HepG2 (cell line): ENCODE measurements at regions of chr2 and their contacts with region 1.

Region 1: DNA sequence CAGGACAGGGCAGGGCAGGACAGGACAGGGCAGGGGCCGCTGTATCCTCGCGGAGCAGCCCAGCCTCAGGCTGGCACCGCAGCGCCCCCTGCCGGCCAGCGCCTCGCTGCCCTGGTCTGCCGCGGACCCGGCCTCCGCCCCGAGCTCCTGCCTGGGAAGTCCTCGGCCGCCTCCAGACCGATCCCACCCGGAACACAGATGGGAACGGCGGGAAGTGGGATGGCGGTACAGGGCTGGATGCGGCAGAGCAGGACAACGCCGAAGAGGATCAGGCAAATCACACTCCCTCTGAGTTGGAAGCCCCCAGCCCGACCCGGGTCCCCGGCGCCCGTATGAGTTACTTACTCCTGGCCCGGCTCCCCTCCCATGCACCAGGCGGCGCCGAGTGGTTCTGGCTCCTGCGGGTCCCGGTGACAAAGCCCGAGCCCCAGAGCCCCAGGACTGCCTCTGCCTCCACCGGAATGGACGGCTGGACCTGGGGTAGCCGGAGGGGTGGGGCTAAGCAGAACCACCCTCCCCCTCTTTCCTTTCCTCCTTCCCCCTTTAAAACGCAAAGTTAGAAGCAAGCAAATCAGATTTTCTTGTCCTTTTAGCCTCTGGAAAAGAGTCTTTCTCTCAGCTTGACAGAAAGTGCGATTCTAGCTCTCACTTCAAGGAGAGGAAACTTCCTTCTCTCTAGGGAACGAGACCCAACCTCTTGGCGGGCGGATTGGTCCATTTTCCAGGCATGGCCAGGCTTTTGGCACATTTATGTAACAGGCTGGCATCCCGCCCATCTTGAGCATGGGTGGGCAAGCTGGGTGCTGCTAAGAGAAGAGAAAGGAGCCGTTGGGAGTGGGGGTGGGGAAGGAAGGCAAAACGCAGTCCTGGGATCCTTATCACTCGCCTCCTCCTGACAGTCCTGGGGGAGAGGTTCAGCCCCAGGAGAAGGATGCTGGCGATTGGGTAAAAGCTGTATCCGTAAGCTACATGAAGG is at the start of gene TP53I3:
- DNase-seq: peak; percentile 87
- ATAC-seq: peak; percentile 92
- H3K4me3 ChIP-seq: peak within 1 kb of the TSS; percentile 67 to 84 (median 74)
- H3K27ac ChIP-seq: peak within 1 kb of the TSS; percentile 89
- H3K4me1 ChIP-seq: peaks cover 30% of the 10 kb centered on the region
- H3K27me3 ChIP-seq: no peaks in the 10 kb centered on the region; a peak in 1 of 5 replicates
- CTCF ChIP-seq: peak; percentile 94
- EP300 ChIP-seq: no peak; a peak in 1 of 4 replicates
- POLR2A ChIP-seq: peak; percentile 73 to 75
- RAD21 ChIP-seq: peak; percentile 98
- total RNA-seq, gene TP53I3: 44.1 and 48.2 TPM in 2 replicates

Region 2: DNA sequence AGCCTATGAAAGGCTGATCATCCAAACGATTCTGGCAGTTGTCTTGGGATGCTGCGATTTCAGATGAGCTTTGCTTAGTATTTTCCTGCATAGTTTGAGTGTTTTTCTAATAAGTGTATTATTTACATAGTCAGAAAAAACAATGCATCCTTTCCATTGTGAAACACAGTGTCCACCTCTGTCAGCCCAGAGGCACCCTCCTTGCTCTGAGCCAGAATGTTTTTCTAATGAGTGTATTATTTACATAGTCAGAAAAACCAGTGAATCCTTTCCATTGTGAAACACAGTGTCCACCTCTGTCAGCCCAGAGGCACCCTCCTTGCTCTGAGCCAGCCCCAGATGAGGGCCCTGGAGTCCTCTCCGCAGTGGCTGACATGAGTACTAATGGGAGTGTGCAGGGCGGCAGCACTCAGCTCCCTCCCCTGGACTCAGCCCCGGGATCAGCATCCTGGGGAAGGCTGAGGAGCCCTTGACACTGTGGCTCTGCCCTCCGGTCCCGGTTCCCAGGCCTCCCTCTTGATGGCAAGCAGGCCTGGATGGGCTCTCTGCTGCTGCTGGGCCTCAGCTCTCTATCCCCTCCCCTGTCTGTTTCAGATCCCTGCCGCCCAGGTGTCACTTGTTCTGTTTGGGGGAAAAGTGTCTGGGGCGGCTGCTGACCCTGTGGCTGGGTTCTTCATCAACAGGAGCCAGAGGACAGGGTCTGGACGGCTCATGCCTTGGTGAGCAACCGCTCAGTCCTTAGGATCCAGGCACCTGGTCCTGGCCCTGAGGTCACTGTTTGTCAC is 68.9 kb before region 1 on chr2:
- CTCF ChIA-PET with region 1: interaction called, 8 read pairs
- POLR2A ChIA-PET with region 1: interaction called, 46 read pairs
- in situ Hi-C with region 1: no loop called
- intact Hi-C with region 1: no loop called
- DNase-seq: peak; percentile 98
- ATAC-seq: peak; percentile 95
- H3K4me3 ChIP-seq: peak overlapping the region; percentile 22 to 70 (median 27); a peak in 5 of 6 replicates
- H3K27ac ChIP-seq: peak overlapping the region; percentile 74
- H3K4me1 ChIP-seq: peaks cover 41% of the 10 kb centered on the region
- H3K27me3 ChIP-seq: no peaks in the 10 kb centered on the region
- CTCF ChIP-seq: peak; percentile 46
- EP300 ChIP-seq: peak; percentile 25 to 81; a peak in 3 of 4 replicates
- POLR2A ChIP-seq: peak; percentile 36 to 78; a peak in 2 of 4 replicates
- RAD21 ChIP-seq: peak; percentile 38

Region 3: GRCh38 chr2:24046930-24047702 is 37.6 kb before region 1 on chr2 and contains the start of gene WDCP:
- CTCF ChIA-PET with region 1: no interaction called
- POLR2A ChIA-PET with region 1: interaction called, 86 read pairs
- in situ Hi-C with region 1: no loop called
- intact Hi-C with region 1: loop called (anchors 1 kb)
- DNase-seq: peak; percentile 99
- ATAC-seq: peak; percentile 93
- H3K4me3 ChIP-seq: peak within 1 kb of the TSS; percentile 84 to 93 (median 88)
- H3K27ac ChIP-seq: peak within 1 kb of the TSS; percentile 90
- H3K4me1 ChIP-seq: peaks cover 59% of the 10 kb centered on the region
- H3K27me3 ChIP-seq: no peaks in the 10 kb centered on the region; a peak in 2 of 5 replicates
- CTCF ChIP-seq: 0 out of 2 replicates have a peak, but pooled peaks have one; percentile 10
- EP300 ChIP-seq: no peak
- POLR2A ChIP-seq: peak; percentile 93 to 97
- RAD21 ChIP-seq: no peak
- total RNA-seq, gene WDCP: 22.6 and 39.4 TPM in 2 replicates

Region 4: DNA sequence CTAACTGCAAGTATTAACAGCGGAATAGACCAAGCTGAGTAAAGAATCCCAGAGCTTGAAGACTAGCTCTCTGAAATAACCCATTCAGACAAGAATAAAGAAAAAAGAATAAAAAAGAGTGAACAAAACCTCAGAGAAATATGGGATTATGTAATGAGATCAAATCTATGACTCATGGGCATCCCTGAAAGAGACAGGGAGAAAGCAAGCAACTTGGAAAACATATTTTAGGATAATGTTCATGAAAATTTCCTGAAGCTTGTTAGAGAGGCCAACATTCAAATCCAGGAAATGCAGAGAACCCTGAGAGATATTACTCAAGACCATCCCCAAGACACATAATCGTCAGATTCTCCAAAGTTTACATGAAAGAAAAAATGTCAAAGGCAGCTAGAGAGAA is 21.1 kb after region 1 on chr2:
- CTCF ChIA-PET with region 1: no interaction called
- POLR2A ChIA-PET with region 1: interaction called, 22 read pairs
- in situ Hi-C with region 1: no loop called
- intact Hi-C with region 1: no loop called
- DNase-seq: no peak
- ATAC-seq: no peak
- H3K4me3 ChIP-seq: no peak overlapping the region
- H3K27ac ChIP-seq: no peak overlapping the region
- H3K4me1 ChIP-seq: peaks cover 23% of the 10 kb centered on the region
- H3K27me3 ChIP-seq: peaks cover 0 to 8% of the 10 kb centered on the region in 2 experiments; a peak in 1 of 5 replicates
- CTCF ChIP-seq: no peak
- EP300 ChIP-seq: no peak
- POLR2A ChIP-seq: no peak
- RAD21 ChIP-seq: no peak

Region 5: DNA sequence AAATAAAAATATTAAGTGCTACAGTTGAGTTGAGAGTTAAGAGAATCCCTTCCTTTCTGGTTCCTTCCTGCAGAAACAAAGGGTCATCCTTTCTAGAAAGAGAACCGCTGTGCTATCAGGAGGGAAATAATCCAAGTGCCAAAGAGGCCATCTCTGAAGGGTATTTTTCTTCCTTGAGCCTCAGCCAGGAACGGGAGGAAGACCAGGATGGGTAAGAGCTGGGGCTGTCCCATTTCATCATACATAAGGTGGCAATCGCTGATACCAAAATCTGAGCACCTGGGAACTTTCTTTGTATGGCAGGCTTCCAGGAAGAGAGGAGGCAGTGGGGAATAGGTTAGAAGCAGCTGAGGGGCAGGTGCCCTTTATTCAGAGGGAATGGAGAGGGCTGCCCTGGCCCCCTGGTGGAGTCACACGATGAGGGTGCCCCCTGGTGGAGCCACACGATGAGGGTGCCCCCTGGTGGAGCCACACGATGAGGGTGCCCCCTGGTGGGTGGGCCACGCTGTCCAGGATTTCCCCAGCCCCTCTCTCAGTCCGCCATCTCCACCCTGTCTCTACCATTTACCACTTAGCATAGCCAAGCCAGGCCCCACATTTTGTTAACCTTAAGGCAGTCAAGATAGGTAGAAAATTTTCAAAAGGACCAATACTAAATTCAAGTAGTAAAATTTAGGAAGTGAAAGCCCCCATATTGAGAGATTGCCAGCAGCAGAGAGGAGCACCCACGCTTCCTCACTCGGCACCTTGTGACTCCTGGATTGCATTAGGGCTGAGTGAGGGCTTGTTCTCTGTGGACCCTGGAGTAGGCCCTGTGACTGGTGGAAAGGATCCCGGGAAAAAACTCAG is 79.7 kb after region 1 on chr2:
- CTCF ChIA-PET with region 1: interaction called, 71 read pairs
- POLR2A ChIA-PET with region 1: interaction called, 11 read pairs
- in situ Hi-C with region 1: loop called (anchors 10 kb)
- intact Hi-C with region 1: loop called (anchors 1 kb)
- DNase-seq: peak; percentile 41
- ATAC-seq: peak; percentile 98
- H3K4me3 ChIP-seq: no peak overlapping the region
- H3K27ac ChIP-seq: no peak overlapping the region
- H3K4me1 ChIP-seq: no peaks in the 10 kb centered on the region
- H3K27me3 ChIP-seq: peaks cover 2 to 21% of the 10 kb centered on the region in 2 experiments; a peak in 3 of 5 replicates
- CTCF ChIP-seq: peak; percentile 92; the same call in 1 of the 2 replicates
- EP300 ChIP-seq: no peak
- POLR2A ChIP-seq: no peak
- RAD21 ChIP-seq: peak; percentile 97

Region 6: GRCh38 chr2:24287171-24287570 is 202.5 kb after region 1 on chr2:
- CTCF ChIA-PET with region 1: no interaction called
- POLR2A ChIA-PET with region 1: no interaction called
- in situ Hi-C with region 1: no loop called
- intact Hi-C with region 1: no loop called
- DNase-seq: no peak
- ATAC-seq: no peak
- H3K4me3 ChIP-seq: no peak overlapping the region
- H3K27ac ChIP-seq: no peak overlapping the region
- H3K4me1 ChIP-seq: no peaks in the 10 kb centered on the region
- H3K27me3 ChIP-seq: no peaks in the 10 kb centered on the region
- CTCF ChIP-seq: no peak
- EP300 ChIP-seq: no peak
- POLR2A ChIP-seq: no peak
- RAD21 ChIP-seq: no peak